Pancreas (tissue), 10 donors: ENCODE measurements at regions of chr18 and their contacts with region 1.

Region 1: GRCh38 chr18:32714571-32715148 is 58.2 kb downstream of the KLHL14 start:
- DNase-seq: peak in 3 of 6 donors; percentile 26 to 60 (median 32)
- ATAC-seq: peak; percentile 88 to 99 (median 98)
- H3K4me3 ChIP-seq: no peak overlapping the region
- H3K27ac ChIP-seq: no peak overlapping the region
- H3K4me1 ChIP-seq: no peaks in the 10 kb centered on the region
- H3K27me3 ChIP-seq: no peaks in the 10 kb centered on the region
- CTCF ChIP-seq: peak; percentile 59 to 68 (median 64)

Region 2: DNA sequence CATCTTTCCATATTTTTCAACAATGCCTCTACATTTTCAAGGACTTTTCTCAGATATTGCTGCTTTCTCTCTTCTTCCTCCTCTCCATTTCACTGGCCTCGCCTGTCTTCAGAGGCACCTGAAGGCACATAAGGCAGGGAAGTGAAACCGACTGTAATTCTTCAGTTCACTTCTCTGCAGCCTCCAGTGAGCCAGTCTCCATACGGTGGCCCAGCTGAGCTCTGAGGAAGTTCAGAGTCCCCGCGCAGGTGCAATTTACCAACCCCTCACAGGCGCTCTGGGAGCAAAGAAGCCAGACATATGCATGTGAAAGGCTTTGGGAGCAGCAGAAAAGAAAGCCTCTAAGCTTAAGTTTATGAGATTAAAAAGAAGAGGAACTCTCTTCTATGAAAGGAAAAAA is 45.7 kb after region 1 on chr18:
- intact Hi-C with region 1: no loop called
- DNase-seq: no peak
- ATAC-seq: no peak
- H3K4me3 ChIP-seq: no peak overlapping the region
- H3K27ac ChIP-seq: no peak overlapping the region
- H3K4me1 ChIP-seq: no peaks in the 10 kb centered on the region
- H3K27me3 ChIP-seq: peaks cover 0 to 2% (median under 1%) of the 10 kb centered on the region in 4 donors
- CTCF ChIP-seq: no peak

Region 3: DNA sequence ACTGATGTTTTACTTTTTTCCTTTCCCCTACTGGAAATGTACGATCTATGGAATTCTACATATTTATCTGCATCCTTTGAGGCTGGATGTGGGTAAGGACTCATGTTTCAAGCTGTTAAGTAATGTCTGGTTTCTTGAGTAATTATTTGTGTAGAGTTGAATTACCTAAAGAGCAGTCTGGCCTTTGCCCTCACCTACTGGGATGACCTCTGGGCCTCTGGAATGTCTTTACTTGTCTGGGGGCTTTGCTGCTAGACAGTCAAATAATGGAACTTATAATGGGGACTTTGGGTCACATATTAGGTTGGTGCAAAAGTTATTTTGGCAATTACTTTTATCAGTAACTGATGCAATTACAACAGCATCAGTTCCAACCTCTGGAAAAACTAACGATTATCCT is 481.1 kb after region 1 on chr18:
- intact Hi-C with region 1: loop called in 1 of 3 experiments (anchors 10 kb)
- DNase-seq: no peak
- ATAC-seq: no peak
- H3K4me3 ChIP-seq: no peak overlapping the region
- H3K27ac ChIP-seq: no peak overlapping the region
- H3K4me1 ChIP-seq: no peaks in the 10 kb centered on the region
- H3K27me3 ChIP-seq: no peaks in the 10 kb centered on the region
- CTCF ChIP-seq: no peak

Region 4: GRCh38 chr18:33269223-33269622 is 554.6 kb after region 1 on chr18:
- intact Hi-C with region 1: no loop called
- DNase-seq: no peak
- ATAC-seq: no peak
- H3K4me3 ChIP-seq: no peak overlapping the region
- H3K27ac ChIP-seq: no peak overlapping the region
- H3K4me1 ChIP-seq: no peaks in the 10 kb centered on the region
- H3K27me3 ChIP-seq: no peaks in the 10 kb centered on the region
- CTCF ChIP-seq: no peak